Colonic mucosa (tissue), 4 donors: ENCODE measurements at regions of chr11 and their contacts with region 1.

Region 1: DNA sequence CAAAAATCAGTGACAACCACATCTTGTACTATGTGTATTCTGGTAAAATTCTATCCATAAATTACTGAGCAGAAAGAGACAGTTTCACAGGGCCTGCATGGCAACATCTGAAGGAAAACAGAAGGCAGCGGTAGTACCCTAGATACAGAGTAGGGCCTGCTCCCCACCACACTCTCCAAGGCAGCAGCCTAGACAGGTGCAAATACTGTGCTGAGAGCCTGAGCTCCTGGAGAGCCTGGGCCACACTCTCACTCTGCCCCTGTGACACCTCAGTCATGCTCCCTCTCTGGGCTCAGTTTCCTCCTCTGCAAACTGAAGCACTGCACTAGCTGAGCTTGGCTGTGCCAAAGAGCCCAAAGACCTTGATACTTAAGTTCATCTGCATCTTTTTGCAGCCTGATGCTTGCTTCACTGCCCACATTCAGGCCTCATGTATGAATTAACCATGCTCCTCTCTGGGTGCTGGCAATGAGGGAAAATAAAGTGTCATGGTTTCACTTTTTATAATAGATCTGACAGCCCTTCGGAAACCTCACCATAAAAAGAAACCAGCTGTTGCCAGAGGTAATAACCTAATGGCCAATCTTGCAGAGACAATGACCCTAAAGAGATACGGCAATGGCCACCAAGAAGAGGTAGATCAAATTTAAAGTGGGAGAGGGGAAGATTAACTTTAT is 104.7 kb downstream of the PLEKHA7 start:
- DNase-seq: no peak
- H3K4me3 ChIP-seq: no peak overlapping the region
- H3K27ac ChIP-seq: no peak overlapping the region
- H3K4me1 ChIP-seq: no peaks in the 10 kb centered on the region
- H3K27me3 ChIP-seq: no peaks in the 10 kb centered on the region
- CTCF ChIP-seq: no peak

Region 2: DNA sequence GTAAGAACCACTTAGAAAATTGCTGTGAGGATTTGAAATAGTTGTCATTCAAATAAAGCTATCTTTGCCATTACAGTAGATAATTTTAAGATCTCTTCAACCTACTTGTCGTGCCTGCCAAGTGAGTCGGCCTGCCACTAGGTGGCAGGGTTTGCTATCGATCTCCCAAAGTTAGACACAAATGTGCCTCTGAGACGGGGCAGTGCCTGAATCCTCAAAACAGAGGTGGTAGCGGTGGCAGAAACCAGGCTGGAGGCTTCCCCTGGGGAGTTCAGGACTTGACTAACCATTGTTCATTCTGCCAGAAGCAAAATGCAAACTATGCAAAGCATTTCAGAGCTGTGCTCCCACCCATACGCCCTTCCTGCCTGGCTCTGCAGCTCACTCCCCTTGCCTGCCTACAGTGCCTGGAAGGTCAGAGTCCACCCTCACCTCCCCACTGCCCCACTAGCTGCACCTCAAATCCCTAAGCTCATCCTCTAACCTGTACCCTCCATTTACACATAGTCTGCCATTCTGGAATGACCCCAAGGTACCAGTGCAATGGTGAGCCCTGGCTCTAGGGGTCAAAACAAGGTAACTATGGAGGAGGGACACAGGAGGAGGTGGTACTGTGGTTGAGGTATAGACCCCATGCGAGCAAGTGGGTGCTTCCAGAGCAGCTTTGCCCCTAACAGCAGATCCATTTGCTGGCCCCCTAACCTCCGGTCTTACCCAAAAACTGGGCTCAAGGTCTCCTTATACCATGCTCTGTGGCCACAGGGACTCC is 89.0 kb before region 1 on chr11:
- intact Hi-C with region 1: loop called (anchors 10 kb)
- DNase-seq: peak; percentile 78
- H3K4me3 ChIP-seq: no peak overlapping the region
- H3K27ac ChIP-seq: no peak overlapping the region
- H3K4me1 ChIP-seq: no peaks in the 10 kb centered on the region
- H3K27me3 ChIP-seq: no peaks in the 10 kb centered on the region
- CTCF ChIP-seq: peak; percentile 69

Region 3: GRCh38 chr11:16958833-16959232 is 49.3 kb after region 1 on chr11:
- intact Hi-C with region 1: no loop called
- DNase-seq: peak; percentile 70
- H3K4me3 ChIP-seq: no peak overlapping the region
- H3K27ac ChIP-seq: no peak overlapping the region
- H3K4me1 ChIP-seq: no peaks in the 10 kb centered on the region
- H3K27me3 ChIP-seq: no peaks in the 10 kb centered on the region
- CTCF ChIP-seq: no peak